ENCODE measurements at regions of chr3 and their contacts with region 1.

Region 1: DNA sequence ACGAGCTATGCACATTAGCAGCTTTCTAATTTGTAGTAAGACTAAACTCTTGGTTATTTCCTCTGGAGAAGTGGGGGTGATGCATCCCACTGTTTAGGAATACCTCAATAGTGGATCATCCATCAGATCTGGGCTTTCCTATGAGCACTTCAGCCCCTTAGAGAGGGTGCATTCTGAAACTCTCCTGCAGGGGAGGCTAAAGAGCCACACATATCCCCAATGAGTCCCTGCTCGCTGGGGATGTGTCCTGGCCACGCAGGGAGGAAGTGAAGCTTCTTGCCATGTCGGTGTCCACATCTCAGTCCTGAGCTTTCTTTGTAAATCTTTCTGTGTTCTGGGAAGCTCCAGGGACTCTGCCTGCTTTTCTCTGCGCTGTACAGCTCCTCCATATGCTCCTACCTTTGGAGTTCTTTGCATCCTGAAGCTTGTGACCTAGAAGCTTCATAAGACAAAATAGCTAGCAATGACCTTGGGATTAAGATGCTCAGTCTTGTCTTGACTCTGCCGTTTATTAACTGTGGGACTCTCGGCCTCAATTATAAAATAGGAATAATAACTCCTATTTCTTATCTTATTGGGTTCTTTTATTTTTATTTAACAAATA is 28.3 kb upstream of the MASP1 start:
- DNase-seq: peak in 8 of 9 donors; percentile 22 to 56 (median 29)
- ATAC-seq: peak; percentile 82
- H3K4me3 ChIP-seq: no peak overlapping the region
- H3K4me3 Mint-ChIP-seq: peak overlapping the region in 5 of 10 donors; percentile 16 to 59 (median 31)
- H3K27ac ChIP-seq: no peak overlapping the region
- H3K27ac Mint-ChIP-seq: no peak overlapping the region
- H3K4me1 ChIP-seq: peaks cover 5 to 8% of the 10 kb centered on the region in 2 donors
- H3K4me1 Mint-ChIP-seq: peaks cover 5 to 15% (median 13%) of the 10 kb centered on the region in 7 donors
- H3K27me3 ChIP-seq: no peaks in the 10 kb centered on the region
- H3K27me3 Mint-ChIP-seq: peaks cover 31 to 38% (median 34%) of the 10 kb centered on the region in 5 donors

Region 2: GRCh38 chr3:187223799-187224198 is 96.0 kb before region 1 on chr3:
- CTCF ChIA-PET with region 1: interaction called, 7 read pairs
- POLR2A ChIA-PET with region 1: no interaction called
- intact Hi-C with region 1: loop called (anchors 1 kb)
- DNase-seq: no peak
- ATAC-seq: no peak
- H3K4me3 ChIP-seq: no peak overlapping the region
- H3K4me3 Mint-ChIP-seq: no peak overlapping the region
- H3K27ac ChIP-seq: no peak overlapping the region
- H3K27ac Mint-ChIP-seq: peak overlapping the region in 1 of 9 donors; percentile 58
- H3K4me1 ChIP-seq: no peaks in the 10 kb centered on the region
- H3K4me1 Mint-ChIP-seq: peaks cover 0 to 3% (median 0%) of the 10 kb centered on the region in 7 donors
- H3K27me3 ChIP-seq: no peaks in the 10 kb centered on the region
- H3K27me3 Mint-ChIP-seq: peaks cover 0 to 16% (median 7%) of the 10 kb centered on the region in 5 donors

Region 3: GRCh38 chr3:187533797-187534196 is 214.0 kb after region 1 on chr3:
- CTCF ChIA-PET with region 1: no interaction called
- POLR2A ChIA-PET with region 1: no interaction called
- intact Hi-C with region 1: no loop called
- DNase-seq: no peak
- ATAC-seq: no peak
- H3K4me3 ChIP-seq: no peak overlapping the region
- H3K4me3 Mint-ChIP-seq: no peak overlapping the region
- H3K27ac ChIP-seq: no peak overlapping the region
- H3K27ac Mint-ChIP-seq: no peak overlapping the region
- H3K4me1 ChIP-seq: no peaks in the 10 kb centered on the region
- H3K4me1 Mint-ChIP-seq: no peaks in the 10 kb centered on the region
- H3K27me3 ChIP-seq: no peaks in the 10 kb centered on the region
- H3K27me3 Mint-ChIP-seq: peaks cover 19 to 46% (median 27%) of the 10 kb centered on the region in 5 donors

Region 4: GRCh38 chr3:187616307-187616972 is 296.6 kb after region 1 on chr3:
- CTCF ChIA-PET with region 1: interaction called, 3 read pairs
- POLR2A ChIA-PET with region 1: interaction called, 6 read pairs
- intact Hi-C with region 1: loop called in 1 of 2 experiments (anchors 1 kb)
- DNase-seq: peak in 8 of 9 donors; percentile 3 to 44 (median 33)
- ATAC-seq: peak; percentile 79
- H3K4me3 ChIP-seq: no peak overlapping the region
- H3K4me3 Mint-ChIP-seq: no peak overlapping the region
- H3K27ac ChIP-seq: no peak overlapping the region
- H3K27ac Mint-ChIP-seq: no peak overlapping the region
- H3K4me1 ChIP-seq: no peaks in the 10 kb centered on the region
- H3K4me1 Mint-ChIP-seq: peaks cover 0 to 5% (median 0%) of the 10 kb centered on the region in 7 donors
- H3K27me3 ChIP-seq: no peaks in the 10 kb centered on the region
- H3K27me3 Mint-ChIP-seq: peaks cover 0 to 26% (median 18%) of the 10 kb centered on the region in 5 donors

Region 5: GRCh38 chr3:187669675-187670504 is 350.1 kb after region 1 on chr3 and contains the start of gene SST:
- CTCF ChIA-PET with region 1: interaction called, 20 read pairs
- POLR2A ChIA-PET with region 1: no interaction called
- intact Hi-C with region 1: no loop called
- DNase-seq: peak in 4 of 9 donors; percentile 1 to 25 (median 8)
- ATAC-seq: no peak
- H3K4me3 ChIP-seq: no peak within 1 kb of the TSS
- H3K4me3 Mint-ChIP-seq: no peak within 1 kb of the TSS
- H3K27ac ChIP-seq: no peak within 1 kb of the TSS
- H3K27ac Mint-ChIP-seq: no peak within 1 kb of the TSS
- H3K4me1 ChIP-seq: no peaks in the 10 kb centered on the region
- H3K4me1 Mint-ChIP-seq: no peaks in the 10 kb centered on the region
- H3K27me3 ChIP-seq: peaks cover 0 to 5% of the 10 kb centered on the region in 2 donors
- H3K27me3 Mint-ChIP-seq: peaks cover 65 to 79% (median 75%) of the 10 kb centered on the region in 5 donors
- total RNA-seq, gene SST: not detected

Region 6: DNA sequence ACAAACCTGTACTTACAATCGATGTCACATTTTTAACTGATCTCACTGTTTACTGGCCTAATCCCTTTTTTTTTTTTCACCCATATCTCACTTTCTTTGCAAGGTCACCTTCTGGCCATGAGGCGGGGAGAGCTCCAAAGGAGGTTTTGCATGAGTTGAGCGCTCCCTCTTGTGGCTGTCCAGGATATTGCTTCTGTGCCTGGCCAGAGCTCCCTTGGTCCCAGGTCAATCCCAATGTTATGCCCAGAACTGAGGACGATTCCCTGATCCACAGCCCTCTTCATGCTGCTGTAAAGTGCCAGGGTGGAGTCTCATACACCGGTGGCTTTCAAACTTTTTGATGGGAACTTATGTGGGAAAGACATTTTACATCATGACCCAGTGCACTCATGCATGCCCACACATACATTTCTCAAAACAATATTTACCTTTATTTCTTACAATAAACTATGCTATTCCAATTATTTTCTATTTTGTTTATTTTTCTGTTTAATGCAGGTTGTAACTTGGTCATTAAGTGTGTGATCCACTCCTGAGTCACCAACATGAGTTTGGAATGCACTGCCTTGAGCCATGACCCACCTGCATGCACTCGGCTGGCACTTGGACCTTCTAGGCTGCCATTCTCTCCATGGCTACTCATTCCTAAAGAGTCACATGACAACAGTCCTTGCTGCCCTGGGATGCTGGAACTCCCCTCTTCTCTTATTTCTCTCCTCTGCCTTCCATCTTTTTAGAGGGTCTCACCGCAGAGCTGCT is 360.0 kb after region 1 on chr3:
- CTCF ChIA-PET with region 1: interaction called, 158 read pairs
- POLR2A ChIA-PET with region 1: no interaction called
- intact Hi-C with region 1: loop called (anchors 1 kb)
- DNase-seq: peak; percentile 21 to 63 (median 41)
- ATAC-seq: peak; percentile 80
- H3K4me3 ChIP-seq: no peak overlapping the region
- H3K4me3 Mint-ChIP-seq: no peak overlapping the region
- H3K27ac ChIP-seq: no peak overlapping the region
- H3K27ac Mint-ChIP-seq: no peak overlapping the region
- H3K4me1 ChIP-seq: no peaks in the 10 kb centered on the region
- H3K4me1 Mint-ChIP-seq: peaks cover 0 to 2% (median 0%) of the 10 kb centered on the region in 7 donors
- H3K27me3 ChIP-seq: no peaks in the 10 kb centered on the region
- H3K27me3 Mint-ChIP-seq: peaks cover 41 to 57% (median 50%) of the 10 kb centered on the region in 5 donors

Region 7: DNA sequence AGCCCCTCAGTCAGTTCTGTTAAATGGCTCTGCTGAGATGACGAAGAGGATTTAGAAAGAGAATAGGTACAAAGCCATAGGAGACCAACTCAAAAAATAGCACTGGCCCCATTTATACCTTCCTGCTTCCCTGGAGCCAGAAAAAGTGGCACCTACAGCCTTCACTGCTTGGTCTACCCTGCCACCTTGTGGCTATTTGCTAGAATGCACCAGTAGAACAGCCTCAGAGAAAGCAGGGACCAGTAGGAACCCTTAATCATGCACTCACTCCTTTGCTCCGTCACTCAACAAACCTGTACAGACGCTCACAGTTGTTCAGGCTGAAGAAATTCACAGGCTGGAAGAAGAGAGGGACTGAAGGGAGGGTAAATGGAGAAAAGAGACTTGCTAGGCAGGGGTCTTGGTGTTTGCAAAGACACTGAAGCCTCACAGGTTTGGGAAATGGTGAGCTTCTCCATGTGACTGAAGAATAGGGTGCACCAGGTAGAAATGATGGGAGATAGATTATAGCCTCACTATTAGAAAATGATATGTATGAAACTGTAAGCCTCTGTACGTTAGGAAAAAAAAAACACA is 394.7 kb after region 1 on chr3:
- CTCF ChIA-PET with region 1: interaction called, 95 read pairs
- POLR2A ChIA-PET with region 1: no interaction called
- intact Hi-C with region 1: loop called (anchors 1 kb)
- DNase-seq: peak; percentile 37 to 73 (median 67)
- ATAC-seq: peak; percentile 92
- H3K4me3 ChIP-seq: no peak overlapping the region
- H3K4me3 Mint-ChIP-seq: no peak overlapping the region
- H3K27ac ChIP-seq: no peak overlapping the region
- H3K27ac Mint-ChIP-seq: peak overlapping the region in 1 of 9 donors; percentile 53
- H3K4me1 ChIP-seq: peaks cover 5 to 7% of the 10 kb centered on the region in 2 donors
- H3K4me1 Mint-ChIP-seq: peaks cover 8 to 17% (median 13%) of the 10 kb centered on the region in 7 donors
- H3K27me3 ChIP-seq: no peaks in the 10 kb centered on the region
- H3K27me3 Mint-ChIP-seq: peaks cover 0 to 8% (median 0%) of the 10 kb centered on the region in 5 donors

Region 8: DNA sequence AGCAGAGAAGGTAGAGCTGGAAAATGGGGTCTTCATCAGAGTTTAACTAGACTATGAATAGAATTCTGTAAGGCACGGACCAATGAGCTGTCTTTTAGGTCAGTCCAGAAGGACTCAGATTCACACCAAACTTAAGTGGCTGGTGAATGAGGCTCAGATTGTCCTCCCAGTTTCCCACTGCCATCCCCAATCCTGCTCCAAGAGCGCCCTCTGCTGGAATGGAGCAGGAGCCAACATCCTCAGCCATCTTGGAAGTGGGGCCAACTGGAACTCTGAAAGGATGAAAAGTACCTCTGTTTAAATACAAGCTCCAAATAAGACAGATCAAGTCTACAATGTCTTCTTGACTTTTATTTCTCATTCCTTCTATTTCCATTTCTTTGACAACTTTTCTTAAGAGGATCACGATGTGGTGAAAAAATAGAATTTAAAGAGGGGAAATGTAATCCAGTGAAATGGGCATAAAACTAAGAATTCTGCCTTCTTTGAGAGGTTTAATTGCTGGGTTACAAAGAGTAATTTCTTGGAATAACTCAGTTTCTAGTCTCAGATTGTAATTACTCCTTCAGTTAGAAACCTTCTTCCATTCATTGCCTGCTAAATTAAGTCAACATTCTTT is 1634.9 kb after region 1 on chr3:
- CTCF ChIA-PET with region 1: no interaction called
- POLR2A ChIA-PET with region 1: no interaction called
- intact Hi-C with region 1: loop called (anchors 2 kb)
- DNase-seq: peak; percentile 35 to 80 (median 63)
- ATAC-seq: peak; percentile 83
- H3K4me3 ChIP-seq: no peak overlapping the region
- H3K4me3 Mint-ChIP-seq: no peak overlapping the region
- H3K27ac ChIP-seq: no peak overlapping the region
- H3K27ac Mint-ChIP-seq: no peak overlapping the region
- H3K4me1 ChIP-seq: no peaks in the 10 kb centered on the region
- H3K4me1 Mint-ChIP-seq: peaks cover 0 to 30% (median 0%) of the 10 kb centered on the region in 7 donors
- H3K27me3 ChIP-seq: no peaks in the 10 kb centered on the region
- H3K27me3 Mint-ChIP-seq: peaks cover 0 to 5% (median 0%) of the 10 kb centered on the region in 5 donors

Measured in naive thymus-derived CD4-positive, alpha-beta T cell (primary cell).